Heart left ventricle (tissue), 16 donors: ENCODE measurements at regions of chr14 and their contacts with region 1.

Region 1: GRCh38 chr14:70585219-70585618 is 15.2 kb downstream of the MED6 start:
- DNase-seq: no peak
- ATAC-seq: no peak
- H3K4me3 ChIP-seq: no peak overlapping the region
- H3K27ac ChIP-seq: no peak overlapping the region
- H3K4me1 ChIP-seq: no peaks in the 10 kb centered on the region
- H3K27me3 ChIP-seq: no peaks in the 10 kb centered on the region
- CTCF ChIP-seq: no peak
- POLR2A ChIP-seq: no peak

Region 2: DNA sequence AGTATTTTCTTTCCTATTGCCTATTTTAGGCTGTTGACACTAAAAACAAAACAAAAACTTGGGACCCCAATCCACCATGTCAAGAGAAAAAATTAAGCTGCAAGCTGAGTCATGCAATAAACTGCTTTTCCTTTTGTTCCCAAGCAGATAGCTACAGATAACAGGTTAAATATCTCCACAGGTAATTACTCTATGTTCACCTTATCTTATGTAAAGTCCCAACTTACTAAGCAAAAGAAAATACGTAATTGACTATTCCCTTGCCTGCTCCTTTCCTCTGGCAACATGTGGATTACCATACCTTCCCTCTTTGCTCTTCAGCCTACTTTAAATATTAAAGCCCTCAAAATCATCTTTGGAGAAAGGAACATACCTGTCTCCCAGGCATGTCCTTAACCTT is 206.5 kb before region 1 on chr14:
- intact Hi-C with region 1: loop called in 1 of 10 experiments (anchors 10 kb)
- DNase-seq: no peak
- ATAC-seq: no peak
- H3K4me3 ChIP-seq: no peak overlapping the region
- H3K27ac ChIP-seq: no peak overlapping the region
- H3K4me1 ChIP-seq: peaks cover 0 to 7% (median 0%) of the 10 kb centered on the region in 12 donors
- H3K27me3 ChIP-seq: no peaks in the 10 kb centered on the region
- CTCF ChIP-seq: no peak
- POLR2A ChIP-seq: no peak